PC-9 (cell line): ENCODE measurements at regions of chr3 and their contacts with region 1.

Region 1: GRCh38 chr3:111904376-111905241 is 45.5 kb downstream of the PHLDB2 start:
- DNase-seq: peak; percentile 47 to 99
- H3K4me3 ChIP-seq: no peak overlapping the region; the same call in 1 of the 2 replicates
- H3K27ac ChIP-seq: peak overlapping the region; percentile 96
- H3K4me1 ChIP-seq: peaks cover 55% of the 10 kb centered on the region
- H3K27me3 ChIP-seq: no peaks in the 10 kb centered on the region
- CTCF ChIP-seq: peak; percentile 30

Region 2: DNA sequence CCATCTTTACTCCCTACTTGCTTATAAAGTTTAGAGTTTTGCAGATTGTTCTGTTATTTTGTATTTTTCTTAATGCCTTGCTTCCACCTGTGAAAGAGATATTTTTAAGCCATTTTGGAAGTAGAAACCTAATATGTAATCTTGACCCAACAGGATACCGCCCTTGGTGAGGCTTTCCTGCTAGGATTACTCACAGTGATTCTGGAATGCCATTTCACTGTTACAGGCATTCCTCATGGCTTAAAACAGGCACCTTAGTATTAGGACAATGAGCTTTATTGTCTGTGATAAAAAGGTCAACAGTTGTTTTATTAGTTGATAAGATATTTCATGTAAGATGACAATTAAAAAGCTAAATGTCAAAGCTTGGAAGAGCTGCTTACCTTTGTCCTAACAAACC is 12.7 kb after region 1 on chr3:
- CTCF ChIA-PET with region 1: interaction called, 3 read pairs
- POLR2A ChIA-PET with region 1: interaction called, 13 read pairs
- intact Hi-C with region 1: no loop called
- DNase-seq: peak; percentile 30 to 92
- H3K4me3 ChIP-seq: no peak overlapping the region
- H3K27ac ChIP-seq: peak overlapping the region; percentile 88
- H3K4me1 ChIP-seq: peaks cover 35% of the 10 kb centered on the region
- H3K27me3 ChIP-seq: no peaks in the 10 kb centered on the region
- CTCF ChIP-seq: no peak

Region 3: GRCh38 chr3:111924283-111924682 is 19.7 kb after region 1 on chr3:
- CTCF ChIA-PET with region 1: interaction called, 3 read pairs
- POLR2A ChIA-PET with region 1: interaction called, 14 read pairs
- intact Hi-C with region 1: loop called (anchors 1 kb)
- DNase-seq: peak in 1 of 2 experiments; percentile 60
- H3K4me3 ChIP-seq: 0 out of 2 replicates have a peak overlapping the region, but pooled peaks have one; percentile 1
- H3K27ac ChIP-seq: peak overlapping the region; percentile 96
- H3K4me1 ChIP-seq: peaks cover 52% of the 10 kb centered on the region
- H3K27me3 ChIP-seq: no peaks in the 10 kb centered on the region
- CTCF ChIP-seq: no peak

Region 4: DNA sequence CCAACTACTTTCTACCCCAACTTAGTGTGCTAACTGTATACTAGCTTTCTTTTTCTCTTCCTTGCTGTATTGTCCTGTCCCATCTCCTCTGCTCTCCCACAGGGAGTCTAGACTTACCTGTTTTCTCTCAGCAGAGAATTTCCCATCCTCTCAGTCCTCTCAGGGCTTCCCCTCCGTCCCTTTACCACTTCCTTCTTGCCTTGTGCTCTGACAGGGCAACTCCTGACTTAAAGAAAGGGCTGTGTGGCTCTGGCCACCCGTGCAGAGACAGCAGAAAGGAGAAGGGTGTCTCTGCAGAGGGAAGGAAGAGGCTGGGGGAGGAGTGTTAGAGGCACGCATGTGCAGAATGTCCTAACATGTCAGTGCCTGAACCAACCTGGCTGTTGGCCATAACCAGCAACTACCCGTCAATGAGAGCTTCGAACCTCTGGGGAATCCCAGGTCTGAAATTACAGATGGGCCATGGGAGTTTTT is 228.4 kb after region 1 on chr3 and contains the start of gene GCSAM:
- CTCF ChIA-PET with region 1: no interaction called
- POLR2A ChIA-PET with region 1: no interaction called
- intact Hi-C with region 1: no loop called
- DNase-seq: no peak
- H3K4me3 ChIP-seq: no peak within 1 kb of the TSS
- H3K27ac ChIP-seq: no peak within 1 kb of the TSS
- H3K4me1 ChIP-seq: peaks cover 32% of the 10 kb centered on the region
- H3K27me3 ChIP-seq: no peaks in the 10 kb centered on the region
- CTCF ChIP-seq: no peak
- total RNA-seq, gene GCSAM: not detected in 2 replicates